Head of caudate nucleus (tissue), 42 donors: ENCODE measurements at regions of chr5 and their contacts with region 1.

Region 1: GRCh38 chr5:66814146-66814991 is 218.2 kb downstream of the MAST4 start:
- DNase-seq: peak in 29 of 42 donors; percentile 19 to 84 (median 52)

Region 2: DNA sequence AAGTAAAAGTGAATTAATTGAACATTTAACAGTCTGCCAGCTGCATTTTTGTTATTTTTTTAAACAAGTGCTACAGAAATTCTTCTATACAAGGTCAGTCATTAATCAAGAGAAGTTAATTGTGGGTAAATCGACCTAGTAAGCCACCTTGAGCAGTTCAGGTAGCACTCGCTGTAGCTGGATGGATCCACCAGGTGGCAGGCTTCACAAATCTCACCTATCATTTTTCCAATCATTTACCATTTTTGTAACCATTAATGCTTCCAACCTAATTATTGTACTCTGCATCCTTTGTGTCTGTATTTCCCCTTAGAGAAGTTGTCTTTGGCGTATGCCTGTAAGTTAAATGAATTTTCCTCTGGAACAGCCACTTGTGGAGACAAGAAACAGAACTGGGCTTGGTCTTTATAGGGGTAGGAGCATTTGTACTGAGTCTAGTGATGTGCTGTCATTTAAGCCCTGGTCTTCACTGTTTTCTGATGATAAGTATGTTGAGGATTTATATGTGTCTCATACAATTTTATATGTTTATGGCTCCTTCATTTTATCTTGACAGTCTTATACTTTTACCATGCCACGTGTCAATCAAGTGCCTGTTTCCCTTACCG is 342.7 kb after region 1 on chr5:
- intact Hi-C with region 1: loop called (anchors 10 kb)
- DNase-seq: peak in 35 of 42 donors; percentile 12 to 75 (median 53)